ENCODE measurements at regions of chr17 and their contacts with region 1.

Region 1: GRCh38 chr17:7484067-7484918 is at the start of gene POLR2A:
- DNase-seq: peak; percentile 99
- ATAC-seq: peak; percentile 67 to 82
- H3K4me3 ChIP-seq: peak within 1 kb of the TSS; percentile 70
- H3K27ac ChIP-seq: peak within 1 kb of the TSS; percentile 91 to 97
- H3K4me1 ChIP-seq: peaks cover 48% of the 10 kb centered on the region
- CTCF ChIP-seq: no peak
- EP300 ChIP-seq: peak in 1 of 2 experiments; percentile 27; a peak in 1 of 5 replicates
- POLR2A ChIP-seq: peak; percentile 99
- RAD21 ChIP-seq: no peak
- polyA plus RNA-seq, gene POLR2A: 22.8 and 57.1 TPM in 2 replicates

Region 2: DNA sequence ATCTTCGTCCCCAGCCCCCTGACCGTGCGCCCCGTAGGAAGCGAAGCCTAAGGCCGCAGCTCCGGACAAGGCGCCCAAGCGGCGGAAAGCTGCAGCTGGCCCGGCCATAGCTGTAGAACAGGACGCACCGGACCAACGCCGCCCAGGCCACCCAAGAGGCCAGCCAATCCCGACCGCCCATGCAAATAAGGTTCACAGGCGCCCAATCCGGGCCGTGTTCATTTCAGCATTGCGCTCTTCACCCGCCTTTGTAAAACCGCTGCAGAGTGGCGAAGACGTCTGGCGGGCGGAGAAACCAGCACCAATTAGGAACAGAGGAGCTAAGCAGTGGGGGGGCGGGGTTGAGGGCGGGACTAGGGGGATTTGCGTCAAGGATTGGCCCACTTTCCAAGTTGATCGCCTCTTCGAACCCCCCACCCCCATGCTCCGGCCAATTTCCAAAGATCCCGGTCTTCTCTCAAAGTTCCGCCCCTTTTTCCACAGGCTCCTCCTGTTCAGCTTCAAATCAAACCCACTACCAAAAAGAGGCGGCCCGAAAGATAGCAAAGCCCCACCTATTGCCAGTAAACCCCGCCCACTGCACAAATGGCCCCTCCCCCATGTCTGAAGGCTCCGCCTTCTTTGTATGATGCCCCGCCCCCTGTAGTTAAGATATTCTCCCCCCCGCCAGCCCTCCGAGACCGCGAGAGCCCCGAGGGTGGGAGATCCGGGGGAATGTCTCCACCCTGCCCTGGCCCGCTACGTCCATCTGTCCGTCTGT is 80.1 kb before region 1 on chr17 and contains the start of gene TMEM256:
- CTCF ChIA-PET with region 1: no interaction called
- POLR2A ChIA-PET with region 1: interaction called, 23 read pairs
- DNase-seq: peak; percentile 98 to 100
- ATAC-seq: peak; percentile 85 to 97
- H3K4me3 ChIP-seq: peak within 1 kb of the TSS; percentile 88
- H3K27ac ChIP-seq: peak within 1 kb of the TSS; percentile 81 to 92
- H3K4me1 ChIP-seq: peaks cover 28% of the 10 kb centered on the region
- CTCF ChIP-seq: no peak
- EP300 ChIP-seq: no peak
- POLR2A ChIP-seq: peak; percentile 88
- RAD21 ChIP-seq: no peak
- polyA plus RNA-seq, gene TMEM256: 127 and 210 TPM in 2 replicates

Region 3: DNA sequence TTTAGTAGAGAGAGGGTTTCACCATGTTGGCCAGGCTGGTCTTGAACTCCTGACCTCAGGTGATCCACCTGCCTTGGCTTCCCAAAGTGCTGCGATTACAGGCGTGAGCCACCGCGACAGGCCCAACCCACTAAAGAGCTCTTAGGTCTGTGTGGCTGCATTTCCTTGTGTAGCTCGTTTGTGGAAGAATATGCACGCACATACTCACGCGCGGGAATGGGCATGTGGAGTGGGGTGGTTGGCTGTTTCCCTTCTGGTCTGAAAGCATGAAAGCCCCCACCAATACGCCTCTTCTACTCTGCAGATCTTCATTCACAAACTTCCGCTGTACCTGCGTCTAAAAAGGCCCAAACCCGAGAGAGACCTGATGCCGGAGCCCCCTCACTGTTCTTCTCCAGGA is 29.3 kb before region 1 on chr17:
- CTCF ChIA-PET with region 1: no interaction called
- POLR2A ChIA-PET with region 1: interaction called, 25 read pairs
- DNase-seq: no peak
- ATAC-seq: no peak
- H3K4me3 ChIP-seq: no peak overlapping the region
- H3K27ac ChIP-seq: peak overlapping the region in 1 of 2 experiments; percentile 17; a peak in 1 of 6 replicates
- H3K4me1 ChIP-seq: no peaks in the 10 kb centered on the region
- CTCF ChIP-seq: no peak
- EP300 ChIP-seq: no peak
- POLR2A ChIP-seq: no peak
- RAD21 ChIP-seq: no peak

Region 4: GRCh38 chr17:7466639-7467341 is 17.5 kb before region 1 on chr17:
- CTCF ChIA-PET with region 1: interaction called, 8 read pairs
- POLR2A ChIA-PET with region 1: interaction called, 13 read pairs
- DNase-seq: no peak
- ATAC-seq: peak; percentile 37 to 39; a peak in 4 of 6 replicates
- H3K4me3 ChIP-seq: no peak overlapping the region
- H3K27ac ChIP-seq: peak overlapping the region in 1 of 2 experiments; percentile 57; a peak in 3 of 6 replicates
- H3K4me1 ChIP-seq: peaks cover 24% of the 10 kb centered on the region
- CTCF ChIP-seq: no peak
- EP300 ChIP-seq: no peak
- POLR2A ChIP-seq: no peak
- RAD21 ChIP-seq: no peak